Activated CD4-positive, alpha-beta memory T cell treated with anti-CD3 and anti-CD28 coated beads, Interleukin-2, amount 10 ng/mL, durations not matched to agents 7 days and 5 days (primary cell): ENCODE measurements at regions of chr21 and their contacts with region 1.

Region 1: DNA sequence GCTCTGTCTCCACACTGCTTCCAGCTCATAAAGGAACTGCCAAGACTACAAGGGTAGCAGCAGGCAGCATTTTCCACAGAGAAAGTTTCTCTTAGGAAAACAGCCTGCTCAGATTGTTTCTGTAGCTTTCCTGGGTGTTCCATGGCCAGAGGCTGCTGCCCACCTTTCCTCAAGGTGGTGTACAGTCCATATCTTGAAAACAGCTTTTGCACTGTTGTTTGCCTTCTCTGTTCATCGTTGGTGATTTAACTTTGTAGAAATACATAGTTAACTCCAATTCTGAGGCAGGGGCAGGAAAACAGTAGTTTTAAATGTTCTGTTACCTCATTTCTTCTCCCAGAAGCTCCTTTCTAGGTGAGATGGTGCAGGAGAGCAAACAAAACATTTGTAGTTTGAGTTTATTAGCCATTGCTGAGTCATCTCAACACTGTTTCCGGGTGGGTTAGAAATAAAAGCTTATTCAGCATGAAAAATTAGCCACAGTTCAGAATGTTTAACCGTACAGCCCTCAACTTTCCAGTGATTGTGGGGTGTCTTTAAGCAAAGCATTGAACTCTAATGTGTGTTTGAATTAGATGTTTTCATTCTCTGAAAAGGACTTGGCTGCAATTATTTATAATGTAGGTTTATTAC is 41.6 kb downstream of the DIP2A start:
- DNase-seq: no peak
- H3K4me3 Mint-ChIP-seq: no peak overlapping the region
- H3K27ac Mint-ChIP-seq: peak overlapping the region; percentile 78
- H3K4me1 Mint-ChIP-seq: peaks cover 56% of the 10 kb centered on the region
- H3K27me3 Mint-ChIP-seq: no peaks in the 10 kb centered on the region

Region 2: GRCh38 chr21:46144464-46145070 is 355.8 kb before region 1 on chr21:
- CTCF ChIA-PET with region 1: interaction called, 10 read pairs
- POLR2A ChIA-PET with region 1: no interaction called
- DNase-seq: no peak
- H3K4me3 Mint-ChIP-seq: no peak overlapping the region
- H3K27ac Mint-ChIP-seq: no peak overlapping the region
- H3K4me1 Mint-ChIP-seq: peaks cover 14% of the 10 kb centered on the region
- H3K27me3 Mint-ChIP-seq: no peaks in the 10 kb centered on the region

Region 3: DNA sequence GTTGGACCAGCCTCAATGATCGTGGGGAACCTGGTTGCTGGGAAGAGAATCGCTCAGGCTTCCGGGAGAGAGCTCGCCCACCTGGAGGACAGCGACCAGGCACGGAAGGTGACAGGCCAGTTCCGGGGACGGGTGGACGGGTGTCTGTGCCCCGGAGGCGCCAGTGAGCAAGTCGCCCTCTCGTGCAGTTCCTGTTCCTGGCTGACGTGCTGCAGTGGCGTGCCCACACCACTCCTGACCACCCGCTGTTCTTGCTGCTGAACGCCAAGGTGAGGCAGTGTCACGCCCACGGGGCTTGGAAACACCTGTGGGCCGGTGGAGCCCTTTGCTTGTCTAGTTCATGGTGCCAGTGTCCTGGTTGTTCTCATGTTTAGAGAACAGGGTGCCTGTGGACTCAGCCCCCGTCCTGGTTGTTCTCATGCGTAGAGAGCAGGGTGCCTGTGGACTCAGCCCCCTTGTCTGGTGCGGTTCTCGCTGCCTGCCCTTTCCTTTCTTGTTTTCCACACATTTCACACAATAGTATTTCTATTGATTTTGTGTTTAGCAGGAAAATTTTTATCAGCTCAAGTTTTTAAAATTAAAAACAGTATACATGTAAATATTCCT is 51.4 kb after region 1 on chr21:
- CTCF ChIA-PET with region 1: interaction called, 5 read pairs
- POLR2A ChIA-PET with region 1: interaction called, 14 read pairs
- DNase-seq: peak; percentile 35
- H3K4me3 Mint-ChIP-seq: no peak overlapping the region
- H3K27ac Mint-ChIP-seq: peak overlapping the region; percentile 84
- H3K4me1 Mint-ChIP-seq: peaks cover 46% of the 10 kb centered on the region
- H3K27me3 Mint-ChIP-seq: no peaks in the 10 kb centered on the region

Region 4: DNA sequence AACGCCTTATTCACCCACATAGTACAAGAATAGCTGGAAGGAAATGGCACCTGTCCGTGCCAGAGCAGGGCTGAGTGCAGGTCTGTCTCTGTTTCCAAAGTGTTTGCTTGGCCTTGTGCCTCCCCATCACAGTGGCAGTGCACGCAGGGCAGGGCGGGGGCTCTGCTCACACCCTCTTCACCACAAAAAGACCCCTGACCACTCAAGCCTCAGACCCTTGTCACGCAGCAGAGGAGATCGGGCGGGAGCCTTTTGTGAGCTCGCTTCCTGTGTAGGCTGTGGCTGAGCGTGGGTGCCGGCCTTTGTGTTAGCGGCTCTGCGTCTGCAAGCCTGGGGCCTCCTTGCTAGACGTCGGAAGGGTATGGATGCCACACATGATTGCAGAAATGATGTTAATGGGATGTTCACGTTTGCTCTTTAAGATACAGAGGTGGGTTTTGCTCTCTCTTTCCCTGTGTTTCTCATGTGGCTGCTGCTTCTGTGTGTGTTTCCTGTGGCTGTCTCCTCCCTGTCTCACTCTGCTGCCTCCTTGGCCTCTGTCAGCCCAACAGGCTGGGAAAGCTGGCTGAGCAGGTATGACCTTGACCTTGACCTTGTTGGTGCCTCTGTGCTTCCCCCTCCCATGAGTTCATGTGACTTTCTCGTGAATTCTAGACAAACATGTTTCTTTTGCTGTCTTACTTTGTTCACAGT is 59.1 kb after region 1 on chr21:
- CTCF ChIA-PET with region 1: no interaction called
- POLR2A ChIA-PET with region 1: interaction called, 12 read pairs
- DNase-seq: peak; percentile 65
- H3K4me3 Mint-ChIP-seq: peak overlapping the region; percentile 52
- H3K27ac Mint-ChIP-seq: peak overlapping the region; percentile 92
- H3K4me1 Mint-ChIP-seq: peaks cover 33% of the 10 kb centered on the region
- H3K27me3 Mint-ChIP-seq: no peaks in the 10 kb centered on the region